PC-9 (cell line): ENCODE measurements at regions of chr12 and their contacts with region 1.

Region 1: GRCh38 chr12:69091442-69092017 is 147.8 kb upstream of the CPSF6 start:
- DNase-seq: no peak
- H3K4me3 ChIP-seq: no peak overlapping the region
- H3K27ac ChIP-seq: no peak overlapping the region
- H3K4me1 ChIP-seq: no peaks in the 10 kb centered on the region
- H3K27me3 ChIP-seq: peaks cover 20% of the 10 kb centered on the region; the same call in 1 of the 2 replicates
- CTCF ChIP-seq: no peak

Region 2: DNA sequence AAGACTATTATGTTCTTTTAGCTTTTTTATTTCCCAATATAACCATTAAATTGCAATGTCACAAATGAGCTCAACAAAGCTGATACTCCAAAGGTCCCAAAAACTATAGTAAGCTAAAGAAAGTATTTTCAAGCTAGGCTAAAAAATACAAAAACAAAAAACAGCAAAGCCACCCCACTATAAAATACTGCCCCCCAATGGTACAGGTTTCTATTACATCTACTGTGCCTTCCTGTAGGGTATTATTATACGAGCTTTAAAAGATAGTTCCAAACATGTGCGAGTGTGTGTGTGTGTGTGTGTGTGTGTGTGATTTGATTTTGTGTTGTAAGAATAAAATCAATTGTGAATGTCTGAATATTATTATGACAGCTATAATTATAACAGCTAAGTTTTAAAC is 933.1 kb before region 1 on chr12:
- CTCF ChIA-PET with region 1: no interaction called
- POLR2A ChIA-PET with region 1: interaction called, 11 read pairs
- intact Hi-C with region 1: no loop called
- DNase-seq: no peak
- H3K4me3 ChIP-seq: no peak overlapping the region
- H3K27ac ChIP-seq: no peak overlapping the region
- H3K4me1 ChIP-seq: no peaks in the 10 kb centered on the region
- H3K27me3 ChIP-seq: no peaks in the 10 kb centered on the region
- CTCF ChIP-seq: peak; percentile 68

Region 3: DNA sequence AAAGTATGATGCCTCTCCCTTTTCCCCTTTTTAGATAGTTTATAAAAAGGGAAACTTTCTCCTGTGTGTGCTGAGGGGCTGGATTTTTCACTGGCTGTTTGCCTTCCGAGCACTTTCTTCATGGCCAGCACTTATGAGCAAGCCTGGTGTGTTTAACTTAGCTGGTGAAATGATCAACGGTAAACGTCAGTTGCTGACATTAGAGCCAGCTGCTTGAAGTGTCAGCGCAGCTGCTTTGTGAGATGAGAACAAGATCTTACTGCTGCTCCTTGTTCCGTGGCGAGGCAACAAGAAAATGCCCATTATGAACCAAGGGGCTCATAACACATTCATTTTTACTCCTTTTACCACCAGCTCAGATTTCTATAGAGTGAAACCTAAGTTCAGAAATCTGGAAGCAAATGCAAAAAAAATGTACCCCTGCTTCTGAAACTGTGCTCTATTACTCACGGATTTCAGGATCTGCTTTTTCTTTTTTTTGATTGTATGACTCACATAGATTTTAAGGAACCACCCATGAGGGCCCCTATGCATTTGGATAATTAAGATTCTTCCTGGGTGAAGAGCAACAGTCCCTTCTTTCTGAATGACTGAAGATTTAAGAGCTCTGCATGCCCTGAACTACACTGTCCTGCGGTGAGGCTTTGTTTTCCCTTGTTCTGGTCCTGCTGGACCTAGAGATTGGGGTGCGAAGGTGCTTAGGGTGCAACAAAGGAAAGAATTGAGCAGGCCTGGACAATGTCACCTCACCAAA is 84.3 kb before region 1 on chr12:
- CTCF ChIA-PET with region 1: no interaction called
- POLR2A ChIA-PET with region 1: no interaction called
- intact Hi-C with region 1: no loop called
- DNase-seq: peak in 1 of 2 experiments; percentile 62
- H3K4me3 ChIP-seq: peak overlapping the region; percentile 15; the same call in 1 of the 2 replicates
- H3K27ac ChIP-seq: peak overlapping the region; percentile 74
- H3K4me1 ChIP-seq: peaks cover 31% of the 10 kb centered on the region
- H3K27me3 ChIP-seq: no peaks in the 10 kb centered on the region
- CTCF ChIP-seq: no peak

Region 4: DNA sequence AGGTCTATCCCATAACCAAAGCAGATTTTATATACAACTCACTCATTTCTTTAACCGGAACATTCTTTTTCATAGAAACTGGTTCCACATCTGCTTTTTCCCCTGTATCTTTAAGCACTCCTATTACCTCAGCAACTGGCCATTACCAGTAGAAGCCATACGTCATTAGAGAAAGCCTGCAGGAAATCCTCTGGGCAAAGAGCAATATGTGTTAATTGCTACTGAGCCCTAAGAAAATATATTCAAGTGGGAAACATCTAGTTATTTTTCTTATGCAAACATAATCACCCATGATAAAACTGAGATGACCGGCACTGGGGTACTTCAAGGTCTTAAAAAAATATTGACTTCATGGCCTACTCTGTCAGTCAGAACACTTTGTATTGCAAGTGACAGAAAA is 119.6 kb after region 1 on chr12:
- CTCF ChIA-PET with region 1: no interaction called
- POLR2A ChIA-PET with region 1: no interaction called
- intact Hi-C with region 1: no loop called
- DNase-seq: no peak
- H3K4me3 ChIP-seq: no peak overlapping the region
- H3K27ac ChIP-seq: no peak overlapping the region
- H3K4me1 ChIP-seq: no peaks in the 10 kb centered on the region
- H3K27me3 ChIP-seq: no peaks in the 10 kb centered on the region
- CTCF ChIP-seq: no peak